ENCODE measurements at regions of chr9 and their contacts with region 1.

Region 1: GRCh38 chr9:38318759-38319495 is 73.6 kb upstream of the ALDH1B1 start:
- DNase-seq: peak; percentile 90
- ATAC-seq: peak; percentile 95
- H3K4me3 ChIP-seq: no peak overlapping the region
- H3K27ac ChIP-seq: peak overlapping the region; percentile 37
- H3K4me1 ChIP-seq: peaks cover 11% of the 10 kb centered on the region
- H3K27me3 ChIP-seq: no peaks in the 10 kb centered on the region; a peak in 1 of 4 replicates
- CTCF ChIP-seq: no peak
- EP300 ChIP-seq: peak; percentile 56 to 94
- POLR2A ChIP-seq: no peak
- RAD21 ChIP-seq: no peak

Region 2: DNA sequence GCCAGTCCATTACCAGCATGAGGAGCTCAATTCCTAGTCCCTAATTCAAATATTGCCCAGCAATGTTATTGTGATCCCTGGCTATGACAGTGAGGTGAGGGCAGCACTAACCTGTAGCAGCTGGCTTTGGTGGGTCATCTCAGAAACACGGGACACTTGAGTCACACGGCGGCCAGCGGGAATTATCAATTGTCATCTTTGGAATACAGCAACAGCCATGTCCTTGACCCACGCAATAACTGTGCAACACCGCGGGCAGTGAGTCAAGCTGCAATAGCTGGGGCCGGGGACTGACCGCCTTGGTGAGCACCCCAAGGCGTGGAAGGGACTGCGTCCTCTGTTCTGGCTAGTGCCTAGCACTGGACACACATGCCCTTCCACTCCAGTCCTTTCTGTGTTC is 11.0 kb after region 1 on chr9:
- CTCF ChIA-PET with region 1: interaction called, 7 read pairs
- POLR2A ChIA-PET with region 1: no interaction called
- RAD21 ChIA-PET with region 1: interaction called, 5 read pairs
- SMC1A ChIA-PET with region 1: interaction called, 30 read pairs
- in situ Hi-C with region 1: no loop called
- intact Hi-C with region 1: no loop called
- DNase-seq: no peak
- ATAC-seq: no peak
- H3K4me3 ChIP-seq: no peak overlapping the region
- H3K27ac ChIP-seq: no peak overlapping the region
- H3K4me1 ChIP-seq: no peaks in the 10 kb centered on the region
- H3K27me3 ChIP-seq: no peaks in the 10 kb centered on the region
- CTCF ChIP-seq: no peak
- EP300 ChIP-seq: no peak
- POLR2A ChIP-seq: no peak
- RAD21 ChIP-seq: no peak

Region 3: DNA sequence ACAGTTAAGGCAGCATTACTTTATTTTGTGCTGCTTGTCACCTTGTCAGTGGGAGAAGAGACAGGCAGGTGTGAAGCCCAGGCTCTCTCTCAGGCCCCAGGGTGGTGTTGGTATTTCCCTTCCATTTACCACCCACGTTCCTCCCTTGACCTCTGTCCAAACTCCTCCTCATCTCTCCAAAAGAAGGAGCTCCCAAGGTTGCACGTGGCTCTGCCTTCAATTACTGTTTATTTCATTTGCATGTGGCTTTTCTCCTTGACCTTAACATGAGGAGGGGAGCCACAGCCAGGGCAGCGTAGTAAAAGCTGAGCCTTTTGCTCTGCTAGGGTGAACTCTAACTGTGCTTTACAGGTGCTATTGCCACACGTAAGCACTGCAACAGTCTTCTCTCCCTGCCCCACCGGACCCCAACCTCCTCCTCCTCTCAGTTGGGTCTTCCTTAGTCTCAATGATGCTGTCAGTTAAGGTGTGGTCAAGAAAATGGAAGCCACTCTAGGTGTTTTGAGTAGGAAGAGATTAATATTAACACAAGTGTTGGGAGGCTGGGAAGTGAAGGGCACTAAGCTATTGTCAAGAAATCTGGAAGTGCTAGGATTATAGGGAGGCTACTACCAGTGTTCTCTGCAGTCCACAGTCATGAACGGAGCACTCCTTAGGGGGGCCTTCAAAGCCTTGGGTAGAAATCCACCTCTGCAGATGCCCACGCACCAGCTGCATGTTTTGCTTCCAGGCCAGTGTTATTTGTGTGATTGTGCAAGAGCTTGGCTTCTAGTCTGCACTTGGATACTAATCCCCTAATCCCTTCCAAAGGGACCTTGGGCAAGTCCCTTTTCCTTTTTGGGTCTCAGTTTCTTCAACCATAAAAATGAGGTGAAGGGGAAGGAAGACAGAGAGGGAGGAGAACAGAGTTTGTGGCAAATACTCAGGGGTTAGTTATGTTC is 69.6 kb after region 1 on chr9:
- CTCF ChIA-PET with region 1: no interaction called
- POLR2A ChIA-PET with region 1: no interaction called
- RAD21 ChIA-PET with region 1: no interaction called
- SMC1A ChIA-PET with region 1: no interaction called
- in situ Hi-C with region 1: no loop called
- intact Hi-C with region 1: no loop called
- DNase-seq: no peak
- ATAC-seq: no peak
- H3K4me3 ChIP-seq: no peak overlapping the region
- H3K27ac ChIP-seq: no peak overlapping the region
- H3K4me1 ChIP-seq: peaks cover 3% of the 10 kb centered on the region; the same call in 1 of the 2 replicates
- H3K27me3 ChIP-seq: no peaks in the 10 kb centered on the region
- CTCF ChIP-seq: no peak
- EP300 ChIP-seq: no peak
- POLR2A ChIP-seq: no peak
- RAD21 ChIP-seq: no peak

Region 4: GRCh38 chr9:38507587-38507986 is 188.7 kb after region 1 on chr9:
- CTCF ChIA-PET with region 1: no interaction called
- POLR2A ChIA-PET with region 1: no interaction called
- RAD21 ChIA-PET with region 1: no interaction called
- SMC1A ChIA-PET with region 1: no interaction called
- in situ Hi-C with region 1: no loop called
- intact Hi-C with region 1: no loop called
- DNase-seq: no peak
- ATAC-seq: no peak
- H3K4me3 ChIP-seq: no peak overlapping the region
- H3K27ac ChIP-seq: no peak overlapping the region
- H3K4me1 ChIP-seq: no peaks in the 10 kb centered on the region
- H3K27me3 ChIP-seq: 0 out of 4 replicates have a peak, but pooled peaks cover 0 to 3% of the 10 kb centered on the region in 2 experiments
- CTCF ChIP-seq: no peak
- EP300 ChIP-seq: no peak
- POLR2A ChIP-seq: no peak
- RAD21 ChIP-seq: no peak

Measured in GM12878 (cell line).